PC-9 (cell line): ENCODE measurements at regions of chr16 and their contacts with region 1.

Region 1: DNA sequence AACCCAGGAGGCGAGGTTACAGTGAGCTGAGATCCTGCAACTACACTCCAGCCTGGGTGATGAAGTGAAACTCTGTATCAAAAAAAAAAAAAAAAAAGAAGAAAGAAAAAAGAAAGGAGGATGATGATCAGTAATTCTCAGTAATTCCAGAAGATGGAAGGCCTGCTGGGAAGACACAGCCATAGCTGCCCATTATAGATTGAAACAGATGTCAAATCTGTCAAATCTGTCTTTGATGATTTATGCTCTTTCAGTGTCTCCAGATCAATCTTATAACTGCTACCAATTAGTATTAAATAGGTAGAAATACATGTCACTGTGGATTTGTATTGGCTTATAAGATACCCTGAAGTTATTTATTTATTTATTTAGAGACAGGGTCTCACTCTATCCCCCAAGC is 42.9 kb upstream of the CPPED1 start:
- DNase-seq: no peak
- H3K4me3 ChIP-seq: no peak overlapping the region
- H3K27ac ChIP-seq: no peak overlapping the region
- H3K4me1 ChIP-seq: no peaks in the 10 kb centered on the region
- H3K27me3 ChIP-seq: no peaks in the 10 kb centered on the region
- CTCF ChIP-seq: no peak

Region 2: DNA sequence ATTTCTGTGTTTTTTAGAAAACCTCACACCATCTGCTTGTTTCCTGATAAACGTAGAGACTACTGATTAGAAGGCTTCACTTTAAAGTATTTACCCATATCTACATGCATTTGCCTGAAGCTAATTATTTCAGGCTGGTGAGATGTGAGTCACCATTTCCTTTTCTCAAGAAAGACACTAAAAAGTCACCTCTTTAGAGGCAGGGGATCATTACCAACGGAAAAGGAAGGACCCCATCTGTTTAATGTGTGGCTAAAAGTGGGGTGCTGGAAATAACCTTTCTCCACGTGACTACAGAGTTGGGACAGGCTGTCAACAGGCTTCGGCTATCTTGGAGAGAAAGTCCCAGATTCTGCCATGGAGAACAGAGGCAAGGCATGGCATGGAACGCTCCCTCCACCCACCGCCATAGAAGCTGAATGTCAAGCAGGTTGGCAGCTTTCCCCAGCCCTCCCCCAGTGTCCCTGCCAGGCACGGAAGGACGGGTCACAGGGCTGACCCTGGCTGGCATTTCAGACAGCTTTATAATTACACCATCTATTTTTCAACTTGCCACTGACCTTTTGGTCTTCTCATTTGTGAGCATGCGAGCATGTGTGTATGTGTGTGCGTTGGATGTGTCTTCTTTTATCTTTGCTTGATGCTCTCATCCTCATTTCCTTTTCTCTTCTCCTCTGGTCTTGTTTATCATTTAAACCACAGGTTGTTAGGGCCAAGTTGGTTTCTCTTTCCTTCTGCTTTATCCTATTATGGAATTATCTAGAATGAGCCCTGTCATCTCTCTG is 199.9 kb before region 1 on chr16:
- CTCF ChIA-PET with region 1: interaction called, 18 read pairs
- POLR2A ChIA-PET with region 1: no interaction called
- intact Hi-C with region 1: no loop called
- DNase-seq: peak in 1 of 2 experiments; percentile 58
- H3K4me3 ChIP-seq: no peak overlapping the region
- H3K27ac ChIP-seq: no peak overlapping the region
- H3K4me1 ChIP-seq: no peaks in the 10 kb centered on the region
- H3K27me3 ChIP-seq: no peaks in the 10 kb centered on the region
- CTCF ChIP-seq: no peak